CD4-positive, alpha-beta memory T cell (primary cell): ENCODE measurements at regions of chr10 and their contacts with region 1.

Region 1: GRCh38 chr10:14837757-14838581 is at the starts of genes CDNF, HSPA14 and MSANTD7:
- DNase-seq: peak; percentile 98 to 99 (median 99)
- H3K4me3 ChIP-seq: peak within 1 kb of the TSS; percentile 68 to 79
- H3K4me3 Mint-ChIP-seq: peak within 1 kb of the TSS; percentile 89 to 97 (median 94)
- H3K27ac ChIP-seq: peak within 1 kb of the TSS; percentile 91
- H3K27ac Mint-ChIP-seq: peak within 1 kb of the TSS; percentile 86 to 99 (median 98)
- H3K4me1 ChIP-seq: peaks cover 26% of the 10 kb centered on the region
- H3K4me1 Mint-ChIP-seq: peaks cover 14 to 33% (median 26%) of the 10 kb centered on the region in 4 donors
- H3K27me3 ChIP-seq: no peaks in the 10 kb centered on the region
- H3K27me3 Mint-ChIP-seq: no peaks in the 10 kb centered on the region
- total RNA-seq, gene CDNF: 1.7 to 2.5 TPM
- total RNA-seq, gene HSPA14: 16.0 to 17.7 TPM
- total RNA-seq, gene MSANTD7: 16.2 to 17.0 TPM

Region 2: GRCh38 chr10:13787015-13787421 is 1051.0 kb before region 1 on chr10:
- CTCF ChIA-PET with region 1: no interaction called
- POLR2A ChIA-PET with region 1: no interaction called
- intact Hi-C with region 1: loop called (anchors 1 kb)
- DNase-seq: peak; percentile 87 to 94 (median 91)
- H3K4me3 ChIP-seq: peak overlapping the region in 1 of 2 donors; percentile 32
- H3K4me3 Mint-ChIP-seq: peak overlapping the region; percentile 65 to 91 (median 81)
- H3K27ac ChIP-seq: peak overlapping the region; percentile 91
- H3K27ac Mint-ChIP-seq: no peak overlapping the region
- H3K4me1 ChIP-seq: peaks cover 51% of the 10 kb centered on the region
- H3K4me1 Mint-ChIP-seq: peaks cover 10 to 34% (median 25%) of the 10 kb centered on the region in 4 donors
- H3K27me3 ChIP-seq: no peaks in the 10 kb centered on the region
- H3K27me3 Mint-ChIP-seq: no peaks in the 10 kb centered on the region

Region 3: DNA sequence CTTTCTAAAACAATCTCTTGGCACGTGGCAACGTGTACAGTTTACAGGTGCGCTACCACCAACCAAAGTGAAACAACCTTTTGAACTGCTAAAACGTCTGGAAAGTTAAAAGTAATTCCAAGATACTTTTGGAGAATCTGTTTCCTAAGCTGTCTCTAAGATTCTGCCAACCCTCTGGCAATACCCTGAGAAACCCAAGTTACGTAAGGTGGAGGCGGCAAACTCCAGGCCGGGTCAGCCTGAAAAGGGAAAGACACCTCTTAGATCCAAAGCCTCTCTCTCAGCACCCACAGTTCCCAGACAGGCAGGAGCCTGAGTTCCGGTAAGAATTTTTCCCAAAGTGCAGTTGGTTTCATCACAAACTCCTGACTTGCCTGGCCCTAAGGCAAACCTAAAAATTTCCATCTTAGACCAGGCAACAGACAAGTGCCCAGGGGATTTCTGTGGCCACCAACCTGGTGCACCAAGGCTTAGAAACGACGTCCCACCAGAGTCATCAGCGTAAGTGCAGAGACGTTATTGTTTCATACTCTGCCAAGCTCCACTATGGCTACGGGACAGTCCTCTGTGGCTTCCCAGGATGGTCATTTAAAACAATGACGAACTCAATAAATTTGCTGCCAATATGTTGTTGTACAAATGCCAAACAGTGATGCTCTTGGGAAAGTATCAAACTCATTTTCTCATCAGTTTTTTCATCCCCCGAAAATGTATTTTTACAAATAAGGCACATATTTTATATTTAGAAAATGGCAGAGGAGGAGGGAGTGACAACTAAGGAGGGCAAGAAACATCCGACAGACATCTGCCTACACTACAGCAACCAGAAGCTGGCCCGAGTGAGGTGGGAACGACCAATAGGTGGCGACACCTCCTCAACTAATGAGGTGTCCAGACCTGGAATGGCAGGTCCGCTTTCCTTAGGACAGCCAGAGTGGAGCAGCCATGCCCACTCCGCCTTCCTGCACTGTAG is 301.4 kb before region 1 on chr10:
- CTCF ChIA-PET with region 1: interaction called, 20 read pairs
- POLR2A ChIA-PET with region 1: interaction called, 3 read pairs
- intact Hi-C with region 1: no loop called
- DNase-seq: peak in 1 of 5 donors; percentile 30
- H3K4me3 ChIP-seq: no peak overlapping the region
- H3K4me3 Mint-ChIP-seq: peak overlapping the region in 1 of 8 donors; percentile 15
- H3K27ac ChIP-seq: peak overlapping the region; percentile 27
- H3K27ac Mint-ChIP-seq: peak overlapping the region; percentile 15 to 94 (median 83)
- H3K4me1 ChIP-seq: peaks cover 91% of the 10 kb centered on the region
- H3K4me1 Mint-ChIP-seq: peaks cover 71 to 100% (median 87%) of the 10 kb centered on the region in 4 donors
- H3K27me3 ChIP-seq: no peaks in the 10 kb centered on the region
- H3K27me3 Mint-ChIP-seq: no peaks in the 10 kb centered on the region

Region 4: DNA sequence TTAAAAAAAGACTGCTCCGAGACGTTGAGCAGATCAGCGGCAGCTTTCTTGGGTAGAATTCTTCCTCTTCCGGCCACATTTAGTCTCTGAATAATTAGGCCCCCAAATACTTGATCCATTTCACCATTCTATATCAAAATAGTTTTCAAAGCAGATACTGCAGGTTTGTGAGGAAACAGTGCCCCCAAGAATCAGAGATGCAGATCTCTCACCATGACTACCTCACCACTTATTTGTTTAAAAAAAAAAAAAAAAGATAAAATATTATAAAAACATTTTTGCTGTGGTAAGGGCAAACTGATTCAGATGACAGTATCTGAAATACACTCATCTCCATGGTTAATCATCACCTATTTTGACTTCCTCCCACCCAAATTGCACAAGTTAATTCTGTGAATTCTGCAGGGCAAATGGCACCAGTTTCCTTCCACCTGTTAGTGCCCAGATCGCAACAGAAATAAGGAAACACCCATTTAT is 273.7 kb before region 1 on chr10:
- CTCF ChIA-PET with region 1: interaction called, 3 read pairs
- POLR2A ChIA-PET with region 1: interaction called, 13 read pairs
- intact Hi-C with region 1: loop called (anchors 5 kb)
- DNase-seq: peak; percentile 69 to 82 (median 78)
- H3K4me3 ChIP-seq: peak overlapping the region in 1 of 2 donors; percentile 8
- H3K4me3 Mint-ChIP-seq: peak overlapping the region; percentile 71 to 91 (median 85)
- H3K27ac ChIP-seq: peak overlapping the region; percentile 79
- H3K27ac Mint-ChIP-seq: peak overlapping the region; percentile 90 to 97 (median 96)
- H3K4me1 ChIP-seq: peaks cover 96% of the 10 kb centered on the region
- H3K4me1 Mint-ChIP-seq: peaks cover 71 to 99% (median 85%) of the 10 kb centered on the region in 4 donors
- H3K27me3 ChIP-seq: no peaks in the 10 kb centered on the region
- H3K27me3 Mint-ChIP-seq: no peaks in the 10 kb centered on the region

Region 5: GRCh38 chr10:14588084-14588937 is 249.7 kb before region 1 on chr10:
- CTCF ChIA-PET with region 1: no interaction called
- POLR2A ChIA-PET with region 1: interaction called, 15 read pairs
- intact Hi-C with region 1: loop called (anchors 5 kb)
- DNase-seq: peak; percentile 44 to 81 (median 52)
- H3K4me3 ChIP-seq: peak overlapping the region in 1 of 2 donors; percentile 37
- H3K4me3 Mint-ChIP-seq: peak overlapping the region; percentile 76 to 90 (median 86)
- H3K27ac ChIP-seq: peak overlapping the region; percentile 86
- H3K27ac Mint-ChIP-seq: peak overlapping the region; percentile 96 to 100 (median 98)
- H3K4me1 ChIP-seq: peaks cover 95% of the 10 kb centered on the region
- H3K4me1 Mint-ChIP-seq: peaks cover 82 to 96% (median 87%) of the 10 kb centered on the region in 4 donors
- H3K27me3 ChIP-seq: no peaks in the 10 kb centered on the region
- H3K27me3 Mint-ChIP-seq: no peaks in the 10 kb centered on the region

Region 6: DNA sequence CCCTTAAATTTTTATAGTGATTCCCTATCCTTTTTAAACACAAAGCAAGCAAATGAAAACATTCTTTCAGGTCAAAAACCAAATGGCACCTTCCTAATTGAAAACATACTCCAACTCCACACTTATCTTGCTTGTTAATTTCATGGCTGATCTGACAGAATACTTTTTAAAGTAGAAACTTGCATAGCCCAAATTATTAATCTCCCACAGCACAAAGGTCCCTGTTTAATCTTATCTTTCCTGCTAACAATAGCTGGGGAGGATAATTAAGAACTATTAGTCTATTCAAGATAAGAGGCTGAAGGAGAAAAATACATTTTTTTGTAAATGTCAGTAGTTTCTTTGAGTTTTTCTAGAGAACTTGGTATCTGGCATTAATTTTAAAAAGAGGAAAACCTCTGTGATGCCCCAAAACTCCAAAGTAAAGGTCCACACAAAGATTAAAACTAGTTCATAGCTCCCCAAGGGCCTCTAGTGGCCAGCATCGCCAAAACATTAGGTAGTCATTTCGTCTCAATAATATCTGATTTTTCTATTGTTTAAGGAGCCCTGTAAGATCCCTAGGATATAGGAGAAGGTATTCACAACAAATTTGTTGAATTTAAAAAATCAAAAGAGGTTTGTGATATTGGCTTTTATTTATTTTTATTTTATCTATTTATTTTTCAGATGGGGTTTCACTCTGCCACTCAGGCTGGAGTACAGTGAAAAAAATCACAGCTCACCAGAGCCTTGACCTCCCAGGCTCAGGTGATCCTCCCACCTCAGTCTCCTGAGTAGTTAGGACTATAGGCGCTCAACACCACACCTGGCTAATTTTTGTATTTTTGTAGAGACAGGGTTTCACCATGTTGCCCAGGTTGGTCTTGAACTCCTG is 14.9 kb before region 1 on chr10:
- CTCF ChIA-PET with region 1: interaction called, 18 read pairs
- POLR2A ChIA-PET with region 1: interaction called, 8 read pairs
- intact Hi-C with region 1: no loop called
- DNase-seq: peak in 4 of 5 donors; percentile 39 to 56 (median 41)
- H3K4me3 ChIP-seq: no peak overlapping the region
- H3K4me3 Mint-ChIP-seq: no peak overlapping the region
- H3K27ac ChIP-seq: no peak overlapping the region
- H3K27ac Mint-ChIP-seq: peak overlapping the region in 2 of 7 donors; percentile 18 to 72
- H3K4me1 ChIP-seq: no peaks in the 10 kb centered on the region
- H3K4me1 Mint-ChIP-seq: peaks cover 0 to 14% (median 4%) of the 10 kb centered on the region in 4 donors
- H3K27me3 ChIP-seq: no peaks in the 10 kb centered on the region
- H3K27me3 Mint-ChIP-seq: no peaks in the 10 kb centered on the region

Region 7: GRCh38 chr10:14959276-14960057 is 121.5 kb after region 1 on chr10 and contains the start of gene MEIG1:
- CTCF ChIA-PET with region 1: interaction called, 4 read pairs
- POLR2A ChIA-PET with region 1: interaction called, 19 read pairs
- intact Hi-C with region 1: loop called (anchors 1 kb)
- DNase-seq: peak; percentile 87 to 92 (median 88)
- H3K4me3 ChIP-seq: peak within 1 kb of the TSS; percentile 79 to 98
- H3K4me3 Mint-ChIP-seq: peak within 1 kb of the TSS; percentile 93 to 99 (median 96)
- H3K27ac ChIP-seq: peak within 1 kb of the TSS; percentile 92
- H3K27ac Mint-ChIP-seq: peak within 1 kb of the TSS; percentile 93 to 99 (median 96)
- H3K4me1 ChIP-seq: peaks cover 14% of the 10 kb centered on the region
- H3K4me1 Mint-ChIP-seq: peaks cover 20 to 40% (median 29%) of the 10 kb centered on the region in 4 donors
- H3K27me3 ChIP-seq: no peaks in the 10 kb centered on the region
- H3K27me3 Mint-ChIP-seq: no peaks in the 10 kb centered on the region
- total RNA-seq, gene MEIG1: not detected